Left ventricle myocardium inferior (tissue), 1 donor: ENCODE measurements at regions of chr5 and their contacts with region 1.

Region 1: DNA sequence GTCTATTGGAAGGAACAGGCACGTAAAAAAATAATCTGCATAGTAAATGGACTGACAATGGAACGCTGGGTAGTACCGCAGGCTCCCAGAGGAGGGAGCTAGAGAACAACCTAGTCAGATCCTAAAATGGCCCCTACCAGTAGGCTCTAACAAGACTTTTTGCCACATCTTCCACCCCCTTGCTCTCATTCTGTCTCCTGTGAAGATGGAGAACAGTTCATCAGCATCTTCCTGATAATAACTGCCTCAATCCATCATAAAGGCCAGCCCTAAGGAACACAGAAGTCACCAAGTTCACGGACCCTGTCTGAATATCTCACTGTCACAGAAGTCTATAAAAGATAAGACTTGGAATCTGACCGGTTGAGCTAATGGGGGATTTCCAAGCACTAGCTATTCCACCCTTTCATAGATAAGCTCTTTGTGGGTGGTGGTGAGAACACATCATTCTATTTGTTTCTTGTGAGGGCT is 133.4 kb downstream of the SLC1A3 start:
- DNase-seq: peak; percentile 55
- H3K4me3 ChIP-seq: no peak overlapping the region
- H3K27ac ChIP-seq: no peak overlapping the region
- H3K4me1 ChIP-seq: peaks cover 17% of the 10 kb centered on the region
- H3K27me3 ChIP-seq: peaks cover 22% of the 10 kb centered on the region
- CTCF ChIP-seq: peak; percentile 73

Region 2: GRCh38 chr5:36521838-36522745 is 217.7 kb before region 1 on chr5:
- intact Hi-C with region 1: no loop called
- DNase-seq: no peak
- H3K4me3 ChIP-seq: no peak overlapping the region
- H3K27ac ChIP-seq: peak overlapping the region; percentile 92
- H3K4me1 ChIP-seq: peaks cover 27% of the 10 kb centered on the region
- H3K27me3 ChIP-seq: no peaks in the 10 kb centered on the region
- CTCF ChIP-seq: no peak

Region 3: DNA sequence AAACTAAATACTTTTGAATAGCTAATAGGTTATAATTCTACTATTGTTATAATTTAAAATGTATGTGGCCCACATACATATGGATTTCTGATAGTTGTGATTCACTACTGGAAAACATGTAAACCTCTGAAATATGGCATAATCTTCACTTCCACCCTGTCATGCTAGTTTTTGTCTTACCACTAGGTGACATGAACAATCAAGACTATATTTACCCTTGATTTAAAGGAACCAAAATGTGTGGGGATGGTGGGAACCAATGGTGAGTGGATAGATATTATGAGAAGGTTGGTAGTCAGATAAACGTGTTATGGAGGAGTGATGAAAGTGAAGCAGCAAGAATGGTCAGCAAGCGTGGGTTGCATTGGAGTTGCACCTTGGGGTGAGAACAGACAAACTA is 126.4 kb after region 1 on chr5:
- intact Hi-C with region 1: loop called (anchors 10 kb)
- DNase-seq: no peak
- H3K4me3 ChIP-seq: no peak overlapping the region
- H3K27ac ChIP-seq: no peak overlapping the region
- H3K4me1 ChIP-seq: peaks cover 10% of the 10 kb centered on the region
- H3K27me3 ChIP-seq: no peaks in the 10 kb centered on the region
- CTCF ChIP-seq: no peak

Region 4: DNA sequence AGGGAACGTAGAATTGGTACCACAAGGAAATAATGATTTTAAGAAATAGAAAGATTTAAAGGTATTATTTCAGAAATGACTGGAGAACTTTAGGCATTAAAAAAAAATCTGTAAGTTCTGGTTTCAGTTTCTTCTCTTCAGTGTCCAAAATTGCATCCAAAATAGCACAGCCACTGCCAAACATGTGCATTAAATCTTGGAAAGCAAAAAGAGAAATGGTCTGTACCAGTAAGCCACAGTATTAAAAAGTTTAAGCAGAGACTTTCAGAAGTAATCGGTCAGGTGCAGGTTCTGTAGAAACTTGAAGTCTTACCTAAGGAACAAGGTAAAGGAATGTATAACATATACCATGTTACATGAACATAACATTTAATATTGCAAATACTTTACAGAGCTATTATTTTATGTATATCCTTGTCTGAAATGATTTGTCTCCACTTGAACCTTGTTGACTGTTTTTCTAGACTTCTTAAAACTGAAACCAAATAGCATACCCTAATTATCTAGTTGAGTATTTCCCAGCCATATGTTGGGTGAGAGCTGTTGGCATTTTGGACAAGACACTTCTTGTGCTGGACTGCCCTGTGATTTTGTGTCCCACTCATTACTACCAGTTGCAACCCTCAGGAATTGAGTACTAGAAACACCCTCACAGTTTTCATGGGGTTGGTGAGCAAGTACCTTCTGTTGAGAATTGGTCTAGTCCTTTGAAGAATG is 168.9 kb after region 1 on chr5:
- intact Hi-C with region 1: no loop called
- DNase-seq: no peak
- H3K4me3 ChIP-seq: no peak overlapping the region
- H3K27ac ChIP-seq: no peak overlapping the region
- H3K4me1 ChIP-seq: peaks cover 76% of the 10 kb centered on the region
- H3K27me3 ChIP-seq: no peaks in the 10 kb centered on the region
- CTCF ChIP-seq: no peak

Region 5: DNA sequence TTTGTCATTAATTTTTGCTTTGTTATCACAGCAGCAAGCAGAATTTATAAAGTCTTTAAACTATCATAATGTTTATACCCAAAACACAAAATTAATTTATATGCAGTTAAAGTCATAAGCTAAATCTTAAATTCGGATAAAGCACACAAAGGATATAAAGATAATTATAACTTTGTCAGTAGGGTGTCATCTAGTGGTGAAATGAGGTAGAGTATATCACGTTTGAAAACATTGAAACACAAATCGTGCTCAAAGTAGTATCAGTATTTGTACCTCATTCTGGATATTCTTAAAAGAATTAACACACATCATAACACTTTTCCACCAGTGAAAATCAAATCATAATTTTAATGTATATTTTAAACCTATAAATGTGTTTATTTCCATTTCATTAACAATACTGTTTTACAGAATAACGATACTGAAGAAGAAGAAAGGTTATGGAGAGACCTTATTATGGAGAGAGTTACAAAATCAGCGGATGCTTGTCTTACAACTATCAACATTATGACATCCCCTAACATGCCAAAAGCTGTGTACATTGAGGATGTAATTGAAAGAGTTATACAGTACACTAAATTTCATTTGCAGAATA is 266.3 kb after region 1 on chr5:
- intact Hi-C with region 1: loop called (anchors 10 kb)
- DNase-seq: no peak
- H3K4me3 ChIP-seq: no peak overlapping the region
- H3K27ac ChIP-seq: no peak overlapping the region
- H3K4me1 ChIP-seq: no peaks in the 10 kb centered on the region
- H3K27me3 ChIP-seq: no peaks in the 10 kb centered on the region
- CTCF ChIP-seq: peak; percentile 74